ENCODE measurements at regions of chr16 and their contacts with region 1.

Region 1: DNA sequence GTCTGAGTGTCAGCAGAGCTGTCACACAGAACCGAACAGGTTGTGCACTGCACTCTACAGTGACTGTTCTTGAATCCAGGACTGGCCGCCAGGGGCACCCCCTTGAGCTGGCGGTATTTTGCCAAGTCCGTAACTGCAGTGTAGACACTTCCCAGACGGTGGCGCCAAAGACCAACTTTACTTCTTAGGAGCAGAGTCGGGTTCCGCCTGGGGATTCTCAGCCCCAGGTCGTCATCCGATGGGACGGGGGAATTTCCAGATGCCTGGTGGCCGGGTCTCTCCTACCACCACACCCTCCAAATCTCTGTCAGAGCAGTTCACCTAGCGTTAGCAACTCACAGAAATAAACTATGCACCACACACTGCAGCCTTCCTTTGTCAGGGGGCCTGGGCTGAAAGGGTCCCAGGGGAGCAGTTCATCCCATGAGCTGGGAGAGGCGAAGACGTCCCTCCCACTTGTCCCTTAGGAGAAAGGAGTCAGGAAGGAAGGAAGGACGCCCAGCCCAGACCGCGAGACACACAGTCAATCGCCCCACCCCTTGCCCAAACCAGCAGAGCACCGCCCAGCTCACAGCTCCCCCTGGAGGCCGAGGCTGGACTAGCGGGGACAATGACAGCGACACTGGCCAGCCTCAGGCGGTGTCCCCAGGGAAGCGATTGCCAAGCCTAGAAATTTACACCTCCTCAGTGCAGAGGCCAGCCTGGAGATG is 7.4 kb upstream of the RIPOR1 start:
- DNase-seq: peak; percentile 98
- H3K4me3 Mint-ChIP-seq: peak overlapping the region; percentile 75
- H3K27ac Mint-ChIP-seq: peak overlapping the region; percentile 93
- H3K4me1 Mint-ChIP-seq: peaks cover 45% of the 10 kb centered on the region
- H3K27me3 Mint-ChIP-seq: peaks cover 22% of the 10 kb centered on the region

Region 2: GRCh38 chr16:66608241-66609138 is 912.8 kb before region 1 on chr16:
- CTCF ChIA-PET with region 1: no interaction called
- POLR2A ChIA-PET with region 1: no interaction called
- DNase-seq: peak; percentile 85
- H3K4me3 Mint-ChIP-seq: no peak overlapping the region
- H3K27ac Mint-ChIP-seq: peak overlapping the region; percentile 66
- H3K4me1 Mint-ChIP-seq: peaks cover 35% of the 10 kb centered on the region
- H3K27me3 Mint-ChIP-seq: no peaks in the 10 kb centered on the region

Region 3: DNA sequence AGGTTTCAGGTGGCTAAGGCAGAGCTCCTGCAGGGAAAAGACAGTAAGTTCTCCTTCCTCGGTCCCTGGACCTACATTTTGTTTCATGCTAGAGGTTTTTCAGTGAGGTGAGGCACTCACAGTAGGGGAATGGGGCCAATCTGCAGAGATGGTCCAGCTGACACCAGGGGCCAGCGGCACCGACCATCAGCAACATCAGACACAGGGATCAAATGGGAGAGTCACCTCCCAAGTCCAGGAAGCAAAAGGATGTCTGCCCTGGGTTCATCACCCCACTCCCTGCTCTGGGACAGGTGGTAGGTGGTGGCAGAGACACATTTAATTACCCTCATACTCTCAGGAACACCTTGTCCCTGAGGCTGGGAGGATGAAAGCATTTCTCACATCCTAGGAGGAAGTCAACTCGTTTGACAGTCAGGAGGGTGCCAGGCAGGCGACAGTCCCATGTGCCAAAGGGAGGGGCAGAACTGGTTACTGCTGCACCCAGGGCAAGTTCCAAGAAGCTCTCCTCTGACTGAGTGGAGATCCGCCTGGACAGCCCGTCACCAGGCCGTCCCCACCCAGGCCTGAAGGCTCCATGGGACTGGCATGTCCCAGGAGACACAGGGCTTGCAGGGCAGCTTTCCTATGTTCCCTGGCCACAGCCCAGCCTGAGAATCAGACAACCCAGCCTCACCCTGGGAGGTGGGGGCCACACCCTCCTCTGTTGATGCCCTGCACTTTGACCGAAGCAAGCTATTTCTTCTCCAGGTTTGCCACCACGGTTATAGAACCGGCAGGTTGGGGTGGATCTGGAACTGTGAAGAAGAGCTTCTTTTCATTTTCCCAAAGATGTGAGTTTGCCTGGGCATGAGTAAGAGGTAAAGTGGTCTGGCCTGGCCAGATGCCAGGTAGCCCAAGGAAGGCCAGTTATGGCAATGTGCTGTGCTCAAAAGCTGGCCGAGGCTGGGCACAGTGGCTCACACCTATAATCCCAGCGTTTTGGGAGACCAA is 59.4 kb before region 1 on chr16:
- CTCF ChIA-PET with region 1: interaction called, 10 read pairs
- POLR2A ChIA-PET with region 1: no interaction called
- DNase-seq: no peak
- H3K4me3 Mint-ChIP-seq: no peak overlapping the region
- H3K27ac Mint-ChIP-seq: no peak overlapping the region
- H3K4me1 Mint-ChIP-seq: peaks cover 8% of the 10 kb centered on the region
- H3K27me3 Mint-ChIP-seq: no peaks in the 10 kb centered on the region

Region 4: DNA sequence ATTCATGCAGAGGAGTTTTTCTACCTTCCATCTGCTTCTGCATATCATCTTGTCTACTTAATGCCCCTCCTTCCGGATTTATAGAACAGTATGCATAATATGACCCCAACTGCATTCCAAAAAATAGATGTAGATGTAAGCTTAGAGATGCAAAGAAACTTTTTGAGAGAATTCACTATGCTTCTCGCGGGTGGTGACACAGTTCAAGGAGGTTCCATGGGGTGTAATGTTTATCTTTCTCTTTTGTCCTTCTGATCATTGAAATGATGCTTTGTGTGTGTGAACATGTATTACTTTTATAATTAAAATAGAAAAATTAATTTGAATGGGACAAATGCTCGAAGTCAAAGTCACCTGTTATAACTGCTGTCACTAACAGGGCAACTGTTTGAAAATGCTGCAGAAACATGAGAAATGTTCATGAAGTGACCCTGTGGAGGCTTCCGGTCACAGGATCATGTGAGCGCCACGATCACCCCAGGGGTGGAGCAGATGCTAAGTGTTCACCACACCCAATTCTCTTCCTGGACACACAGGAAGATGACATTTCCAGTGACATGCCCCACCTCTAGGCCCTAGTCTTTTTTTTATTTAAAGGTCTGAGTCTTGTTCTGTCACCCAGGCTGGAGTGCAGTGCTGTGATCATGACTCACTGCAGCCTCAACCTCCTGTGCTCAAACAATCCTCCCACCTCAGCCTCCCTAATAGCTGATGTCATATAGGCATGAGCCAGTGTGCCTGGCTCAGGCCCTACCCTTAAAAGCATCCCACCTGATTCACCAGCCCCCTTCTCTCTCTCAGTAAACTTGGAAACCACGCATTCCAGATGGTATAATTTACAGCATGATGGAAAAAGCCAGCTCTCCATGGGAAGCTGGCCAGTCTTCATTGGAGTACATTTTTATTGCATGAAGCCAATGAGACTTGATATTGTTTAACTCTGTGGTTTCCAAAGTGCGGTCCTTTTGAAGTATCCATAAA is 16.9 kb before region 1 on chr16:
- CTCF ChIA-PET with region 1: interaction called, 195 read pairs
- POLR2A ChIA-PET with region 1: no interaction called
- DNase-seq: peak; percentile 79
- H3K4me3 Mint-ChIP-seq: peak overlapping the region; percentile 43
- H3K27ac Mint-ChIP-seq: peak overlapping the region; percentile 97
- H3K4me1 Mint-ChIP-seq: peaks cover 52% of the 10 kb centered on the region
- H3K27me3 Mint-ChIP-seq: no peaks in the 10 kb centered on the region

Region 5: GRCh38 chr16:67555795-67556212 is 34.6 kb after region 1 on chr16:
- CTCF ChIA-PET with region 1: interaction called, 57 read pairs
- POLR2A ChIA-PET with region 1: interaction called, 4 read pairs
- DNase-seq: peak; percentile 30
- H3K4me3 Mint-ChIP-seq: peak overlapping the region; percentile 62
- H3K27ac Mint-ChIP-seq: peak overlapping the region; percentile 100
- H3K4me1 Mint-ChIP-seq: peaks cover 57% of the 10 kb centered on the region
- H3K27me3 Mint-ChIP-seq: no peaks in the 10 kb centered on the region

Region 6: DNA sequence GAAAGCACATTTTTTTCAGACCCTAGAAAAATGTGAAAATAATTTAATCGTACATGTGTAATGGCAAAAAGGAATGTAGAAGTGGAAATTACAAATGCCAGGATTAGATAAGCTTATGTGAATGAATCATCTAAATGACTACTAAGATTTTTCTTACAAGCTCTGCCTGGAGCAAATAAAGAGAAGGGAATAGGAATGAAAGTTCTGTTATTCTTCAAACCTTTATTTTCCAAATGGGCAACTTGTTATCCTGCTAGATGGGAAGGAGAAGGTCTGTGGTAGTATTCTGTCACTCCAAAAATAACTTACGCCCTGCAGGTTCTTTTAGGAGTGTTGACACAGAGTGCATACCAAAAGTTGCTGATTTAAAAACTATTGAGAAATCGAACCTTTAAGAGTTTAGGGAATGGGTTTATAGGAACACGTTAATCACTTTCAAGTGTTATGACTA is 50.8 kb after region 1 on chr16:
- CTCF ChIA-PET with region 1: interaction called, 19 read pairs
- POLR2A ChIA-PET with region 1: no interaction called
- DNase-seq: no peak
- H3K4me3 Mint-ChIP-seq: no peak overlapping the region
- H3K27ac Mint-ChIP-seq: peak overlapping the region; percentile 9
- H3K4me1 Mint-ChIP-seq: peaks cover 15% of the 10 kb centered on the region
- H3K27me3 Mint-ChIP-seq: no peaks in the 10 kb centered on the region

Region 7: DNA sequence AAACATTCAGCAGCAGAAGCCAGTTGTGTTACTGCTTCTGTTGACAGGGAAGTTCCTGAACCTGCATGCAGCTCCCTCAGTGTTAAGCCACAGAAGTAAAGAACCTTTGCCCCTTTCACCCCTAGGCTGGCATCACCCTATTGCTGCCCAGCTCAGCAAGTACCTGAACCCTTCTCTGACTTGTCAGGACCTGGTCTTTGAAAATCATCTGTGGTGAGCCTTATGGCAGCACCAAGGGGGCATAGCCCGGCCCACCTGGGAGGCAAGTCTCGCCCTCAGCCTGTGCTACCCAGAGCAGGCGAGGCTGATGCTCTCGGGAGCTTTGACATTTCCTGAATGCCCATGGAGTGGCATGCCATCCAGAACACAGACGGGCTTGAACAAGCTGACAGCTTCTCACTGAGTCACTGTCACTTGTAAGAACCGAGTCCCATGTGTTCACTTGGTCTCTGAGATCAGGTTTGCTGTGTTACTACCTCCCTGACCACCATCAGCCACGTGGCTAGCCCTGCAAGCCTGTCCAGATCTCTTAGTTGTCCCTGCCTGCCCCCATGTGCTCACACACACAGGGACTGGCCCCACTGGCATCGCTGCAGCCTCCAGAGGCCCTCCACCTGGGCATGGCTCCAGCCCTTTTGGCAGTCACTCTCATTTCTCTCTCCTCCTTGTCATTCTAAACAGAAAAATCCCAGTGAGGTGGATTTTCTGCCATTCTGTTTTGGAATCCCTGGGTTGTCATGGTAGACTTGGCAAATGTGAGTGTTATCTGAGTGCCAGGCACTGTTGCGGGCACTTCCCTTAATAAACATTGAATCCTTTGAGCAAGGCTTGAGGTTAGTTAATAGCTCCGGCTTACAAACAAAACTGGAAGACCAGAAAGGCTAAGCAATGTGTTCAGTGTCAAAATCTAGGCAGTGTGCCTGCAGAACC is 120.8 kb after region 1 on chr16:
- CTCF ChIA-PET with region 1: interaction called, 67 read pairs
- POLR2A ChIA-PET with region 1: no interaction called
- DNase-seq: no peak
- H3K4me3 Mint-ChIP-seq: no peak overlapping the region
- H3K27ac Mint-ChIP-seq: no peak overlapping the region
- H3K4me1 Mint-ChIP-seq: peaks cover 16% of the 10 kb centered on the region
- H3K27me3 Mint-ChIP-seq: no peaks in the 10 kb centered on the region

Region 8: DNA sequence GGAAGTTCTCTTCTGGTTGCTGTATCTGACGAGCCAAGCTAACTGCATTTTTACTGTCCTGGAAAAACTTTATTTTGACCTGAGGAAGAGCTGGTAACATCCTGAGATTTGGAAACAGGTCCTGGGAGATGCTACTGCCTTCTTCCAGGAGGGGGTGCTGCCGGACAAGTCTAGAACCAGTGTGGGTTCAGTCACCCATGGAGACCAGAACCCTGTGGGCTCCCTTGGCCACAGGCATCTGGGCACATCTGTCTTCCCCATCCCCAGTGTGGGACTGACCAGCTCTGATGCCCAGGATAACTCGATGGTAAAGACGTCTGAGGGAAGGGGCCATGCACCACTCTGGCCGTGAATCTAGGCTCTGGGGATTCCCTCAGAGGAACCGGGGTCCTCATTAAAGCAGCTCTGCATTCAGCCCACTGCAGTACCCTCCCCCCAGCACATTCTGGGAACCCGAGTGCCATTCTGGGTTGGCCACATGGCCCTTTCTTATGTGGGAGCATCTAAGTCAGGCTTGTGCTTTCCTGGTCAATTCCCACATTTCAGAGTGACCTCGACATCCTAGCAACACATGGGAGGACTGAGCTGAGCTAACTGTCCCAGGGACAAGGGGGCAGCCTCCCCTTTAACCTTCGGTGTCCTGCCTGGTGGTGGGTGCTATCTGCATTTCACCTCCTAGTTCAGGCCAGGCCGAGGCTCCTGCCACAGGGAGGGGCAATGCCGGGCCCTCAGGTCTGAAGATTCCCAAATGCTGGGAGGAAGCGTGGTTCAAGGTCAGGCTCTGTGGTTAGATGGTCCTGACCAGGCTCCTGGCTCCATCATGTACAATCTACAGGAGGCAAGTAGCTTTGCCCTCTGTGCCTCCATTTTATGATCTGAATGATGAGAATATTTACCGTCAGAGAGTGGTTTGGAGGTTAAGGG is 151.8 kb after region 1 on chr16:
- CTCF ChIA-PET with region 1: interaction called, 177 read pairs
- POLR2A ChIA-PET with region 1: no interaction called
- DNase-seq: peak; percentile 74
- H3K4me3 Mint-ChIP-seq: no peak overlapping the region
- H3K27ac Mint-ChIP-seq: no peak overlapping the region
- H3K4me1 Mint-ChIP-seq: peaks cover 11% of the 10 kb centered on the region
- H3K27me3 Mint-ChIP-seq: no peaks in the 10 kb centered on the region